Activated T-helper 2 cell treated with anti-CD3 and anti-CD28 coated beads, Interferon-gamma antibody, Interleukin-2, Interleukin-4, amounts not matched to agents 10 μg/mL and 5 μg/mL and 100 μg/mL, durations not matched to agents 14 hours and 24 hours and 36 hours (primary cell): ENCODE measurements at regions of chr1 and their contacts with region 1.

Region 1: GRCh38 chr1:22431965-22432364 is 19.7 kb upstream of the ZBTB40 start:
- DNase-seq: no peak
- H3K4me3 Mint-ChIP-seq: no peak overlapping the region
- H3K27ac Mint-ChIP-seq: no peak overlapping the region
- H3K4me1 Mint-ChIP-seq: no peaks in the 10 kb centered on the region
- H3K27me3 Mint-ChIP-seq: peaks cover 11% of the 10 kb centered on the region

Region 2: DNA sequence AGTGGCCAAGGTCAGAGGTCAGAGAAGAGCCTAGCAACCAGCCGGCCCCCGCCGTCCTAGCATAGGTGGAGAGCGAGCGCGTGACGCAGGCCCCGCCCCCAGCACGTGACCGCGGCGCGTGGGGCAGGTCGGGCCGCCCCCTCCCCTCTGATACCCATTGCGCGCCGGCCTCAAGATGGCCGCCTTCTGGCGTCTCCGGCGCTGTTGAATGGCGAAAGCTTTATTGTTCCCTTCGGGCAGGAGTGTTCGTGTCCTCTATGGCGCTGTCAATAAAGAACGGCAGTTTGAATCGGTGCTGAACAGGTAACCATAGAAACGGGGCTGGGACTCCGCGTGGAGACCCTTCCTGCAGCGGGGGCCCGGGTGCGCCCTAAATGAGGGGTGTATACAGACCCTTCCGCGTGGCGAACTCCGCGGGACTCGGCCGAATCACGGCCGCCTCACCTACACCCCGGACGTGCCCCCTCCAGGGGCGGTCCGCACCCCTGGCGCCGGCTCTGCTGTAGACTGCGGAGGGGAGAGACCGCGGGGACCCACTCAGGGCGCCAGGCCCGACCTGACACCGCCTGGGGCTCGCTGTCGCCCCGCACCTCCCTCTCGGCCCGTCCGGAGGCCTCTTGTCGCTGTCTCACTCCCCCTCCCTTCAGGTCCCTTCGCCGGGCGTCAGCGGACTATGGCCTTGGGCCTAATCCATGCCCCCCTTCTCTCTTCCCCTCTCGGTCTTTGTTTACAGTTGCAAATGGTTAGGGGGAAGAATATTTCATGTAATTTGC is 19.9 kb after region 1 on chr1 and contains the start of gene ZBTB40:
- intact Hi-C with region 1: loop called (anchors 1 kb)
- DNase-seq: peak; percentile 92
- H3K4me3 Mint-ChIP-seq: peak within 1 kb of the TSS; percentile 94
- H3K27ac Mint-ChIP-seq: peak within 1 kb of the TSS; percentile 84
- H3K4me1 Mint-ChIP-seq: peaks cover 20% of the 10 kb centered on the region
- H3K27me3 Mint-ChIP-seq: peaks cover 2% of the 10 kb centered on the region
- total RNA-seq, gene ZBTB40: 17.6 and 18.6 TPM in 2 replicates

Region 3: DNA sequence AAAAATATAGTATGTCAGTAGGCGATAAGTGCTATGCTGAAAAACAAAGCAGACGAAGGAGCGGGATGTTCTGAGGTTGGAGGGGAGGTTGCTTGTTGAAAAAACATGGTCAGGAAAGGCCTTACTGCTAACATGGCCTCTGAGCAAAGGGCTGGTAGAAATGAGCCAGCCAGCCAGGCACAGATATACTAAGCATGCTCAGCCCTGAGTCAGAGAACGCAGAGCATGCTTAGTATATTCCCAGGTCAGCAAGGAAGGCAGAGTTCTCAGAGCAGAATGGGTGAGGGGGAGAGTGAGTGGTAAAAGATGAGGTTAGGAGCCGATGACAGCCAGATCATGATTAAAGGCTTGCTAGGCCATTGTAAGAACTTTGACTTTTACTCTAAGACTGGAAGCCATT is 56.4 kb after region 1 on chr1:
- intact Hi-C with region 1: no loop called
- DNase-seq: no peak
- H3K4me3 Mint-ChIP-seq: no peak overlapping the region
- H3K27ac Mint-ChIP-seq: no peak overlapping the region
- H3K4me1 Mint-ChIP-seq: peaks cover 11% of the 10 kb centered on the region
- H3K27me3 Mint-ChIP-seq: no peaks in the 10 kb centered on the region